Dorsolateral prefrontal cortex (tissue), 120 donors: ENCODE measurements at regions of chrX and their contacts with region 1.

Region 1: GRCh38 chrX:50697691-50698090 is 116.3 kb downstream of the SHROOM4 start:
- DNase-seq: no peak
- H3K4me3 ChIP-seq: no peak overlapping the region
- H3K27ac ChIP-seq: no peak overlapping the region
- H3K27me3 ChIP-seq: peaks cover 0 to 93% (median 45%) of the 10 kb centered on the region in 45 donors
- CTCF ChIP-seq: no peak

Region 2: DNA sequence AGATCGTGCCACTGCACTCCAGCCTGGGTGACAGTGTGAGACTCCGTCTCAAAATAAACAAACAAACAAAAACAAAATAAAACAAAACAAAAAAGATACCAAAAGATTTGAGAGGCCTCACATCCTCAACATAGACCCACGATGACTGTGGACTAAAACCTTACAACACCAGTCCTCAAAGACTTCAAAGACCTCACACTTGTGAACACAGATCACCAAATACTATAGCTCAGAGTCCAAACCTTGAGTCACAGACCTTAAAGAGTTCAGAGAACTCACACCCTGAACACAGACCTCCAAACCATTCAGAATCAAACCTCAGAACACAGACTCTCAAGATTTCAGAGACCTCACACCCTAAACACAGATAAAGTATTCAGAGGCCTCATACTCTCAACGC is 881.3 kb before region 1 on chrX:
- intact Hi-C with region 1: no loop called
- DNase-seq: no peak
- H3K4me3 ChIP-seq: no peak overlapping the region
- H3K27ac ChIP-seq: no peak overlapping the region
- H3K27me3 ChIP-seq: peaks cover 0 to 47% (median 9%) of the 10 kb centered on the region in 45 donors
- CTCF ChIP-seq: no peak

Region 3: GRCh38 chrX:50594788-50595187 is 102.9 kb before region 1 on chrX:
- intact Hi-C with region 1: no loop called
- DNase-seq: no peak
- H3K4me3 ChIP-seq: no peak overlapping the region
- H3K27ac ChIP-seq: peak overlapping the region in 3 of 59 donors; percentile 1 to 16 (median 2)
- H3K27me3 ChIP-seq: peaks cover 0 to 69% (median 6%) of the 10 kb centered on the region in 45 donors
- CTCF ChIP-seq: no peak

Region 4: GRCh38 chrX:50920132-50920531 is 222.4 kb after region 1 on chrX:
- intact Hi-C with region 1: no loop called
- DNase-seq: no peak
- H3K4me3 ChIP-seq: no peak overlapping the region
- H3K27ac ChIP-seq: no peak overlapping the region
- H3K27me3 ChIP-seq: peaks cover 0 to 49% (median 8%) of the 10 kb centered on the region in 45 donors
- CTCF ChIP-seq: peak in 52 of 56 donors; percentile 19 to 67 (median 46)

Region 5: GRCh38 chrX:50988649-50989048 is 291.0 kb after region 1 on chrX:
- intact Hi-C with region 1: loop called in 1 of 2 experiments (anchors 5 kb)
- DNase-seq: peak in 5 of 10 donors; percentile 27 to 44 (median 29)
- H3K4me3 ChIP-seq: no peak overlapping the region
- H3K27ac ChIP-seq: no peak overlapping the region
- H3K27me3 ChIP-seq: peaks cover 0 to 75% (median 24%) of the 10 kb centered on the region in 45 donors
- CTCF ChIP-seq: peak in 55 of 56 donors; percentile 39 to 75 (median 60)